ENCODE measurements at regions of chr12 and their contacts with region 1.

Region 1: GRCh38 chr12:68807576-68808387 is at the start of gene MDM2:
- DNase-seq: peak; percentile 95
- H3K4me3 Mint-ChIP-seq: peak within 1 kb of the TSS; percentile 97
- H3K27ac Mint-ChIP-seq: peak within 1 kb of the TSS; percentile 98
- H3K4me1 Mint-ChIP-seq: peaks cover 24% of the 10 kb centered on the region
- H3K27me3 Mint-ChIP-seq: no peaks in the 10 kb centered on the region
- total RNA-seq, gene MDM2: 165 to 166 TPM

Region 2: GRCh38 chr12:68364893-68365725 is 442.7 kb before region 1 on chr12:
- CTCF ChIA-PET with region 1: no interaction called
- intact Hi-C with region 1: loop called (anchors 2 kb)
- DNase-seq: peak; percentile 90
- H3K4me3 Mint-ChIP-seq: peak overlapping the region; percentile 79
- H3K27ac Mint-ChIP-seq: peak overlapping the region; percentile 90
- H3K4me1 Mint-ChIP-seq: peaks cover 57% of the 10 kb centered on the region
- H3K27me3 Mint-ChIP-seq: no peaks in the 10 kb centered on the region

Region 3: DNA sequence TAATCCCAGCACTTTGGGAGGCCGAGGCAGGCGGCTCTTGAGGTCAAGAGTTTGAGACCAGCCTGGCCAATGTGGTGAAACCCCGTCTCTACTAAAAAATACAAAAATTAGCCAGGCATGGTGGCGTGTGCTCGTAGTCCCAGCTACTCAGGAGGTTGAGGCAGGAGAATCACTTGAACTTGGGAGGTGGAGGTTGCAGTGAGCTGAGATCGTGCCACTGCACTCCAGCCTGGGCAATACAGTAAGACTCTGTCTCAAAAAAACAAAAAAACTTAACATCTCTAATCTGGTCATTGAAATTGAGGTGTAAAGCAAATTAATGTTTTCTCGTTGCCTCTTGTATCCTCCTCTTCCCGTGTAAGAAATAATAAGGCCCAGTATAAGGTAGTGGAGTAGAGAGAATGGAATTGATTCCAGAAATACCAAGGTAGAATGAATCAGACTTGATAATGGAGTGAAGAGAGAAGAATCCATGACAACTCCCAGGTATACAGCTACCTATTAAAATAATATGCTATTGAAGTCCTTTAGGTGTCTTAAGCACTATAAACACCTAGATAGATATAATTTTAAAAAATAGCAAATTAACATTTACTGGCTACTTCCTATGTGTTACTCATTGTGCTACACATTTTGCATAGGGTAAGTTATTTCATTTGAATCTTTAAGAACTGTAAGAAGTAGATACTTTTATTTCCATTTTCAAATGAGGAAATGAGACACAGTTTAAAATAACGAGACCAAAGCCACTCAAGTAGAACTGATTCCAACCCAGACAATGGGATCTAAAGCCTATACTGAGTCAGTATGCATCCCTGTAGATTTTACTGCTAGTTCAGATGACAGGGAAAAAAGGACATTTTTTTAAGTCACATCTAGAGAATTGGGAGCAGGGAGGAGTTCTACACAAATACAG is 173.9 kb before region 1 on chr12:
- CTCF ChIA-PET with region 1: no interaction called
- intact Hi-C with region 1: loop called (anchors 5 kb)
- DNase-seq: no peak
- H3K4me3 Mint-ChIP-seq: no peak overlapping the region
- H3K27ac Mint-ChIP-seq: peak overlapping the region; percentile 36
- H3K4me1 Mint-ChIP-seq: peaks cover 91% of the 10 kb centered on the region
- H3K27me3 Mint-ChIP-seq: no peaks in the 10 kb centered on the region

Region 4: DNA sequence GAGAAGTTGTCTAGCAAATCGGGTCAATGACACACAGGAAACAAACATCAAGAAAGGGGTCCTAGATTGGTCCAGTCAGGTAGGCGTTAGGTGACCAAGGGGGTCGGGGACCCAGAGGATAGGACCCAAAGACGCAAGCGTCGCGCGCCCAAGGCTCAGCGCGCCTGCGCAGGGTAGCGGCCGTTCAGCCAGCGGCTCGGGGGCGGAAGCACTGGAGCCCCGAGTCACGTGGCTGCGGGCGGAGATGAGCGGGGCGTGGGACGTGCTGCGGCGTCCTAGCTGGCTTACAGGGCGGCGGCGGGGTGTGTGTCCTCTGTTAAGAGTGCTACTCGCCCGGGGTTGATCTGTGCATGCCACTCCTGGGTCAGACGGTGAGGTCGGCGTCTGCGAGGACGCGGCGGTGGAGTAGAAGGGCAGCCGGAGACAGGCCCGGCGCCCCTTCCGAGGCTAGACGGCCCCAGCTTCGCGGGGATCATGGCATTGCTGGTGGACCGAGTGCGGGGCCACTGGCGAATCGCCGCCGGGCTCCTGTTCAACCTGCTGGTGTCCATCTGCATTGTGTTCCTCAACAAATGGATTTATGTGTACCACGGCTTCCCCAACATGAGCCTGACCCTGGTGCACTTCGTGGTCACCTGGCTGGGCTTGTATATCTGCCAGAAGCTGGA is 61.7 kb before region 1 on chr12 and contains the start of gene SLC35E3:
- CTCF ChIA-PET with region 1: interaction called, 3 read pairs
- intact Hi-C with region 1: loop called (anchors 1 kb)
- DNase-seq: peak; percentile 93
- H3K4me3 Mint-ChIP-seq: peak within 1 kb of the TSS; percentile 95
- H3K27ac Mint-ChIP-seq: peak within 1 kb of the TSS; percentile 74
- H3K4me1 Mint-ChIP-seq: peaks cover 22% of the 10 kb centered on the region
- H3K27me3 Mint-ChIP-seq: no peaks in the 10 kb centered on the region
- total RNA-seq, gene SLC35E3: 2.8 to 3.1 TPM

Region 5: GRCh38 chr12:68831272-68831671 is 23.5 kb after region 1 on chr12:
- CTCF ChIA-PET with region 1: interaction called, 27 read pairs
- intact Hi-C with region 1: loop called (anchors 1 kb)
- DNase-seq: no peak
- H3K4me3 Mint-ChIP-seq: no peak overlapping the region
- H3K27ac Mint-ChIP-seq: no peak overlapping the region
- H3K4me1 Mint-ChIP-seq: peaks cover 25% of the 10 kb centered on the region
- H3K27me3 Mint-ChIP-seq: no peaks in the 10 kb centered on the region